ENCODE measurements at regions of chr12 and their contacts with region 1.

Region 1: DNA sequence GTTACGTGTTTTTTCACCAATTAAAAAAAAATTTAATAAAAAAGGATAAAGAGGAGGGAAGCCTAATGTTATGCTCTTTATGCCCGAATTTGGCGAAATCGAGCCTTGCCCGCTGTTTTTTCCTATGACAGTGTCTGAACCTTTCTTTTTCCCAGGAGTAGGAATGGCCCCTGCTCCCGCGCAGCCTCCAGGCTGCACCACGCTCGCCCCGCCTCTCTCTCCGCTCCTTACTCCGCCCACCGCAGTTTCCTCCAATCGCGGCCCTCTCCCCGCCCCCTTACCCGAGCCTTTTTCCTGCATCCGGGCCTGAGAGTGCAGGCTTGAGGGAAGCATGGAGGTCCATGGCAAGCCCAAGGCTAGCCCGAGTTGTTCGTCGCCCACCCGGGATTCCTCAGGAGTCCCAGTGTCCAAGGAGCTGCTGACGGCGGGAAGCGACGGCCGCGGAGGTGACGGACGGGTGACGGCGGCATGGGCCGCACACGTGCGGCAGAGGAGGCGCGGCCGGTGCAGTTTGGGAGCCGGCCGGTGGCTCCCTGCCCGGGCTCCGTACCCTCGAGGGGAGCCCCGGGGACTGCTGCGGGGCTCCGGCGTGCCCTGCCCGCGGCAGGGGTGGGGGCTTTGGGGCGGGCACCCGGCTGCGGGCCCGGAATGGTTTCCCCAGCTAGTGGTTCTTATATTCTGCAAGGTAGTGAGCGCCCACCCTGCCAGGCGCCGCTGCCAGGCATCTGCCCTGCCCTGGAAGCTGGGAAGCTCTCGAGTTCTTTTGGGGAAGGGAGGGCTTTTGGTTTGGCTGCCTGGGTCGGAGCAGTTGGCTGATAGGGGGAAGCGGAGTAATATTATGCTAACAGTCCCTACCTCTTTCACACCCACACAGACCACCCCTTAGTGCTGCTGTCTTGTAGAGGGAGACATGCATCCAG is at the start of gene NOPCHAP1:
- DNase-seq: peak; percentile 64 to 84 (median 78)
- ATAC-seq: peak; percentile 100
- H3K4me3 ChIP-seq: peak within 1 kb of the TSS; percentile 91
- H3K4me3 Mint-ChIP-seq: peak within 1 kb of the TSS; percentile 90 to 95 (median 94)
- H3K27ac ChIP-seq: peak within 1 kb of the TSS; percentile 73
- H3K27ac Mint-ChIP-seq: peak within 1 kb of the TSS; percentile 63 to 87 (median 74)
- H3K4me1 ChIP-seq: peaks cover 12 to 13% of the 10 kb centered on the region in 2 donors
- H3K4me1 Mint-ChIP-seq: peaks cover 19 to 47% (median 37%) of the 10 kb centered on the region in 7 donors
- H3K27me3 ChIP-seq: no peaks in the 10 kb centered on the region
- H3K27me3 Mint-ChIP-seq: peaks cover 0 to 13% (median 5%) of the 10 kb centered on the region in 5 donors
- total RNA-seq, gene NOPCHAP1: 10.5 to 18.0 (median 15.2) TPM

Region 2: DNA sequence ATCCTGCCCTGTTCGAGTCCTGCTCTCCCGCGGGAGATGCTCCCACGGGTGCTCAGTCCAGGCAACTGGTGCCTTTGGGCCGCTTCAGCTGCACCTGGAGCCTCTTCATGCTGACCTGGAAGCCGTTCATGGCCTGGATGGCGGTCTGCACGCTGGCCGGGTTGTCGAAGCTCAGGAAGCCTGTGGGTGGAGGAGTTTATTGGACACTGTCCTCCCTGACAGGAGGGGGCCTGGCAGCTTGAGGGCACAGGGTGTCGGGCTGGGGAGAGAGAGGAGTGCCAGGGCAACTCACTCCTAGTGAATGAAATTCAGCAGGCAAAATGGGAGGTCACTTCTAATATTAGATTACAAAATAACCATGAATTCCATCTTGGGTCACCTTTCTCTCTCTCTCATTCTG is 838.9 kb before region 1 on chr12:
- CTCF ChIA-PET with region 1: no interaction called
- POLR2A ChIA-PET with region 1: no interaction called
- intact Hi-C with region 1: loop called in 1 of 2 experiments (anchors 10 kb)
- DNase-seq: no peak
- ATAC-seq: no peak
- H3K4me3 ChIP-seq: no peak overlapping the region
- H3K4me3 Mint-ChIP-seq: no peak overlapping the region
- H3K27ac ChIP-seq: no peak overlapping the region
- H3K27ac Mint-ChIP-seq: no peak overlapping the region
- H3K4me1 ChIP-seq: no peaks in the 10 kb centered on the region
- H3K4me1 Mint-ChIP-seq: no peaks in the 10 kb centered on the region
- H3K27me3 ChIP-seq: no peaks in the 10 kb centered on the region
- H3K27me3 Mint-ChIP-seq: peaks cover 0 to 67% (median 5%) of the 10 kb centered on the region in 5 donors

Region 3: GRCh38 chr12:104303538-104304151 is 682.6 kb before region 1 on chr12 and contains the start of gene EID3:
- CTCF ChIA-PET with region 1: no interaction called
- POLR2A ChIA-PET with region 1: no interaction called
- intact Hi-C with region 1: loop called in 1 of 2 experiments (anchors 2 kb)
- DNase-seq: peak; percentile 86 to 96 (median 91)
- ATAC-seq: peak; percentile 99
- H3K4me3 ChIP-seq: peak within 1 kb of the TSS; percentile 56
- H3K4me3 Mint-ChIP-seq: peak within 1 kb of the TSS; percentile 87 to 99 (median 96)
- H3K27ac ChIP-seq: peak within 1 kb of the TSS; percentile 84
- H3K27ac Mint-ChIP-seq: peak within 1 kb of the TSS; percentile 91 to 99 (median 97)
- H3K4me1 ChIP-seq: peaks cover 7 to 24% of the 10 kb centered on the region in 2 donors
- H3K4me1 Mint-ChIP-seq: peaks cover 35 to 72% (median 56%) of the 10 kb centered on the region in 7 donors
- H3K27me3 ChIP-seq: no peaks in the 10 kb centered on the region
- H3K27me3 Mint-ChIP-seq: no peaks in the 10 kb centered on the region
- total RNA-seq, gene EID3: 8.2 to 11.8 (median 10.4) TPM

Region 4: DNA sequence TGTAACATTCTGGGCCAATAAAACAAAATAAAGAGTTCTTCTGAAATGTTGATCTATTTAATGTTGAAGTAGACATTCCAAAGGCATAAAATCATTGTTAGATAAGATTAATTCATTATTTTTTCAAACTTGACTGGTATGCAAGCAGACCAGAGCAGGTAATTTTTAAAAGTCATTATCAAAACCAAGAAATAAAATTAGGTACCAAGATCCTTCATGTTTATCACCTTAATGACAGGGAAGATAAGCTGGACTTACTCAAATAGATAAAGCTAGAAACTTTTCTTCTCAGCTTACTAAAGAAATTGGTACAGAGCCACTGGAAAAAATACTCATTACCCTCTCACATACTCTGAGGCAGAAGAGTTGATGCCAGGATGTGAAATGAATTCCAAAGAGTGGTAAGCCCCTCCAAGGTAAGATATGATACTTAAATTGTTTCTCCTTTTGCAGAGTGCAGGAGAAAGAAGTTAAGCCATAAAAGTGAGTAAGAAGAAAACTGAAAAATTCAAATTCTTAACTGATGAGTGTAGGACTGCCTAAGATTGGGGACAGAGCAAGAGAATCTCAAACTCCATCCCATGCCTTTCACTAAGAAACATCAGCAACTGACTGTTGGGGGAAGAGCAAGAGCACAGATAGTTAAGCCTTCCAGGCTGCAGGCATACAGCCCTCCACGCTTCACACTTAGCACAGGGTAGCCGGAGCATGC is 140.1 kb before region 1 on chr12:
- CTCF ChIA-PET with region 1: no interaction called
- POLR2A ChIA-PET with region 1: no interaction called
- intact Hi-C with region 1: no loop called
- DNase-seq: no peak
- ATAC-seq: no peak
- H3K4me3 ChIP-seq: no peak overlapping the region
- H3K4me3 Mint-ChIP-seq: no peak overlapping the region
- H3K27ac ChIP-seq: no peak overlapping the region
- H3K27ac Mint-ChIP-seq: no peak overlapping the region
- H3K4me1 ChIP-seq: no peaks in the 10 kb centered on the region
- H3K4me1 Mint-ChIP-seq: no peaks in the 10 kb centered on the region
- H3K27me3 ChIP-seq: no peaks in the 10 kb centered on the region
- H3K27me3 Mint-ChIP-seq: peaks cover 0 to 21% (median 6%) of the 10 kb centered on the region in 5 donors

Region 5: DNA sequence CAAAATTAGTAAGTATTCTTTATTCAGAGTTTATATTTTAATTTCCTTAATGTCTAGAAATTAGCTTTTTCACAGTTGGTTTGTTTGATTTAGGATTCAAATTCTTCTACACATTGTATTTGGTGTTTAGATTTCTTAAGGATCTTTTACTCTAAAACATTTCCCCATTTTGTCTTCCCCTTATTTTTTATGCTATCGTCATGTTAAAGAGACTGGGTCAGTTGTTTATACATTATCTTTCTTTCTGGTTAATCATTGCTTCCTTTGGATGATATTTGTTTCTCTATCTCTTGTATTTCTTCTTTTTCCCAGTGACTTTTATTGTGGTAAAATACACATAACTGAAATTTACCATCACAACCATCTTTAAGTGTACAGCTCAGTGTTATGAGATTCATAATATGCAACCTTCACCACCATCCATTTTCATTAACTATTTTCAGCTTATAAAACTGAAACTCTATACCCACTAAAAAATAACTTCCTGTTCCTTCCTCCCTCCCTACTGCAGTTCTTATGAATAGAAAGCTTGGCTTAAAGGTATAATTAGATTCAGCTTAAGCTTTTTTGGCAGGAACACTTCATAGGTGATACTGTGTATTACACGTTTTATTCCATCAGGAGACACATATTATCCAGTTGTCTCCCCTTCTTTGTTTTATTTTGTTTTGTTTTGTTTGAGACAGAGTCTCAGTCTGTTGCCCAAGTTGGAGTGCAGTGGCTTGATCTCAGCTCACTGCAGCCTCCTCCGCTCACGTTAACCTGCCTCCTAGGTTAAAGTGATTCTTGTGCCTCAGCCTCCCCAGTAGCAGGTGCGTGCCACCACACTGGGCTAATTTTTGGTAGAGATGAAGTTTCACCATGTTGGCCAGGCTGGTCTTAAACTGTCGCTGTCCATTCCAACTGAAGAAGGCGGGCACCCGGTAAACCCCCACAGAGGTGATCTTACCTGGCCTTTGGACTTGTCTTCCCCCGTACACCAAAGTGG is 44.8 kb after region 1 on chr12:
- CTCF ChIA-PET with region 1: no interaction called
- POLR2A ChIA-PET with region 1: no interaction called
- intact Hi-C with region 1: loop called (anchors 2 to 5 kb)
- DNase-seq: no peak
- ATAC-seq: no peak
- H3K4me3 ChIP-seq: no peak overlapping the region
- H3K4me3 Mint-ChIP-seq: peak overlapping the region in 2 of 10 donors; percentile 1 to 22
- H3K27ac ChIP-seq: no peak overlapping the region
- H3K27ac Mint-ChIP-seq: peak overlapping the region in 6 of 9 donors; percentile 0 to 57 (median 22)
- H3K4me1 ChIP-seq: no peaks in the 10 kb centered on the region
- H3K4me1 Mint-ChIP-seq: peaks cover 9 to 25% (median 11%) of the 10 kb centered on the region in 7 donors
- H3K27me3 ChIP-seq: no peaks in the 10 kb centered on the region
- H3K27me3 Mint-ChIP-seq: no peaks in the 10 kb centered on the region

Region 6: GRCh38 chr12:105036937-105037649 is 50.8 kb after region 1 on chr12:
- CTCF ChIA-PET with region 1: no interaction called
- POLR2A ChIA-PET with region 1: no interaction called
- intact Hi-C with region 1: loop called (anchors 2 to 5 kb)
- DNase-seq: peak in 4 of 9 donors; percentile 1 to 16 (median 6)
- ATAC-seq: no peak
- H3K4me3 ChIP-seq: no peak overlapping the region
- H3K4me3 Mint-ChIP-seq: peak overlapping the region in 8 of 10 donors; percentile 32 to 79 (median 44)
- H3K27ac ChIP-seq: peak overlapping the region; percentile 11
- H3K27ac Mint-ChIP-seq: peak overlapping the region in 8 of 9 donors; percentile 56 to 87 (median 80)
- H3K4me1 ChIP-seq: peaks cover 11 to 15% of the 10 kb centered on the region in 2 donors
- H3K4me1 Mint-ChIP-seq: peaks cover 4 to 29% (median 16%) of the 10 kb centered on the region in 7 donors
- H3K27me3 ChIP-seq: no peaks in the 10 kb centered on the region
- H3K27me3 Mint-ChIP-seq: no peaks in the 10 kb centered on the region

Region 7: GRCh38 chr12:106247674-106248311 is 1261.5 kb after region 1 on chr12 and contains the start of gene CKAP4:
- CTCF ChIA-PET with region 1: no interaction called
- POLR2A ChIA-PET with region 1: no interaction called
- intact Hi-C with region 1: no loop called
- DNase-seq: peak; percentile 45 to 65 (median 55)
- ATAC-seq: peak; percentile 59
- H3K4me3 ChIP-seq: peak within 1 kb of the TSS; percentile 69
- H3K4me3 Mint-ChIP-seq: peak within 1 kb of the TSS; percentile 81 to 92 (median 86)
- H3K27ac ChIP-seq: peak within 1 kb of the TSS; percentile 80
- H3K27ac Mint-ChIP-seq: peak within 1 kb of the TSS; percentile 58 to 98 (median 94)
- H3K4me1 ChIP-seq: peaks cover 17 to 22% of the 10 kb centered on the region in 2 donors
- H3K4me1 Mint-ChIP-seq: peaks cover 13 to 37% (median 31%) of the 10 kb centered on the region in 7 donors
- H3K27me3 ChIP-seq: no peaks in the 10 kb centered on the region
- H3K27me3 Mint-ChIP-seq: peaks cover 0 to 19% (median 0%) of the 10 kb centered on the region in 5 donors
- total RNA-seq, gene CKAP4: 4.3 to 27.2 (median 13.0) TPM

Region 8: DNA sequence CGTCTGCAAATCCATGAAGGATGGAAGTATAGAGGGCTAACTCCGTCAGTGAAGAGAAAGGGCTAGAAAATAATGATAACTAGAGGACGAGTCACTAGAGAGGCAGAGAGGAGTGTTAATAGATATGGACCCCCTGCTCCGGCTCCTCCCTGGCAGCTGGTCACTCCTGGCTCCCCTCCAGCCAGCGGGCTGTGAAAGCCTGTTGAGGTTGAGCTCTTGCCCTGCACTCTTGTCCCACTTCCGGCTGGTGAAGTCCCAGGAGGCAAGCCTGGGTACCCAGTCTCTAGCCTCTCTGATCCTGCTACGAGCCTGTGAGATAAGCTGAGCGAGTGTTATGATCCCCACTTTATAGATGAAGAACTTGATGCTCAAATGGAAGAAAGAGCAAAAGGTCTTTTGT is 1686.9 kb after region 1 on chr12:
- CTCF ChIA-PET with region 1: no interaction called
- POLR2A ChIA-PET with region 1: no interaction called
- intact Hi-C with region 1: no loop called
- DNase-seq: no peak
- ATAC-seq: no peak
- H3K4me3 ChIP-seq: no peak overlapping the region
- H3K4me3 Mint-ChIP-seq: no peak overlapping the region
- H3K27ac ChIP-seq: no peak overlapping the region
- H3K27ac Mint-ChIP-seq: no peak overlapping the region
- H3K4me1 ChIP-seq: no peaks in the 10 kb centered on the region
- H3K4me1 Mint-ChIP-seq: no peaks in the 10 kb centered on the region
- H3K27me3 ChIP-seq: peaks cover 0 to 6% of the 10 kb centered on the region in 2 donors
- H3K27me3 Mint-ChIP-seq: peaks cover 27 to 43% (median 37%) of the 10 kb centered on the region in 5 donors

Measured in naive thymus-derived CD4-positive, alpha-beta T cell (primary cell).